ENCODE measurements at regions of chr1 and their contacts with region 1.

Region 1: DNA sequence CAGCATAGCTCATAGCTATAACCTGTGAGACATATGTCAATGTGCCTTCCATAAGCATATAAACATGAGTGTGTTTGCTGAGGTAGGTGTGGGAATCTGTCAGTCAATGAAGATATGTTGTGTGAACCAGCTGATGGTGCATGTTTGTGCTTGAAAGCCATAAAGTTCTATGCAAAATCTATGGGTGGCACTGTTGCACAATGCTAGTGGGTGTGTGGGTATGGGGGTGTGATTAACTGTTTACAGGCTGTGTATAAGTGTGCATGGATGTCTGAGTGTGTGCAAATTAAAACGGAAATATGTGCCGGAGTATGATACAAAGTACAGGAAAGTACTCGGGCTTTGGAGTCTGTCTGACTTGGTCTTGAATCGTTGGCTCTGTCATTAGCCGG is 1.0 kb upstream of the ATP2B4 start:
- DNase-seq: peak; percentile 86 to 95 (median 91)
- H3K4me3 ChIP-seq: peak overlapping the region in 5 of 7 experiments; percentile 9 to 98 (median 88)
- H3K27ac ChIP-seq: peak overlapping the region; percentile 80 to 91
- H3K4me1 ChIP-seq: peaks cover 7 to 77% (median 58%) of the 10 kb centered on the region in 4 experiments
- H3K27me3 ChIP-seq: no peaks in the 10 kb centered on the region

Region 2: GRCh38 chr1:203428981-203429599 is 196.5 kb before region 1 on chr1:
- CTCF ChIA-PET with region 1: no interaction called
- POLR2A ChIA-PET with region 1: no interaction called
- DNase-seq: peak in 1 of 3 donors; percentile 9
- H3K4me3 ChIP-seq: no peak overlapping the region
- H3K27ac ChIP-seq: no peak overlapping the region
- H3K4me1 ChIP-seq: no peaks in the 10 kb centered on the region
- H3K27me3 ChIP-seq: peaks cover 0 to 12% (median 6%) of the 10 kb centered on the region in 5 experiments

Region 3: GRCh38 chr1:203440771-203441170 is 184.9 kb before region 1 on chr1:
- CTCF ChIA-PET with region 1: no interaction called
- POLR2A ChIA-PET with region 1: no interaction called
- DNase-seq: peak; percentile 4 to 20 (median 15)
- H3K4me3 ChIP-seq: no peak overlapping the region
- H3K27ac ChIP-seq: no peak overlapping the region
- H3K4me1 ChIP-seq: no peaks in the 10 kb centered on the region
- H3K27me3 ChIP-seq: peaks cover 0 to 14% (median 8%) of the 10 kb centered on the region in 5 experiments

Region 4: DNA sequence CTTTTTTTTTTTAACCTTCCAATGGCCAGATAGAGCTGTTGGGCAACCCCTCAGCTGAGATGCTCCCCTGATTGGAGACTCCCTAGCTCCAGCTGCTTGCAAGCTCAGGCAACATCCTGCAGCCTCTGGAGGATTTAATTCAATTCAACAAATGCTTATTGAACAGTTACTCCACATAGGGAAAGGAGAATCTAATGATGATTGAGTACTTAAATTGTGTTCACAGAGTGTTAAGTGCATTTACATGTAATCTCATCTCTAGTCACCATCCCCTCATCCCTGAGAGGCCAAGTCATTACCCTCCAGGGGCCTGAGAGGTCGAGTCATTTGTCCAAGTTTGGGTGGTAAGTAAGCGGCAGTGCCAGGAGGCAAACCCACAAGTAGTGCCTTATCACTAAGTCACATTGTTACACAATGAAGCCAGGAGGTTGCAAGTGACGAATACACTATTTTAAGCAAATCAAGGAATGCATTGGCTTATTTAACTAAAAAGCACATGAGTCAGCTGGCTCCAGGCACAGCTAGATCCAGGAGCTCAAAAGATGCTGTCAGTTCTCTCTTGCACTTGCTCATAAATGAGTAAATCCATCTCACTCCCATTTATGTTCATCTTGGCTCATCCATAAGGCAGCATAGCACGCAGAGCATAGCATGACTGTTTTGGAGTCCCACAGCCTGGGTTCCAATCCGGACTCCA is 67.4 kb before region 1 on chr1:
- CTCF ChIA-PET with region 1: no interaction called
- POLR2A ChIA-PET with region 1: no interaction called
- DNase-seq: peak in 1 of 3 donors; percentile 11
- H3K4me3 ChIP-seq: peak overlapping the region in 1 of 7 experiments; percentile 1
- H3K27ac ChIP-seq: no peak overlapping the region
- H3K4me1 ChIP-seq: no peaks in the 10 kb centered on the region
- H3K27me3 ChIP-seq: peaks cover 0 to 2% (median 0%) of the 10 kb centered on the region in 5 experiments

Region 5: DNA sequence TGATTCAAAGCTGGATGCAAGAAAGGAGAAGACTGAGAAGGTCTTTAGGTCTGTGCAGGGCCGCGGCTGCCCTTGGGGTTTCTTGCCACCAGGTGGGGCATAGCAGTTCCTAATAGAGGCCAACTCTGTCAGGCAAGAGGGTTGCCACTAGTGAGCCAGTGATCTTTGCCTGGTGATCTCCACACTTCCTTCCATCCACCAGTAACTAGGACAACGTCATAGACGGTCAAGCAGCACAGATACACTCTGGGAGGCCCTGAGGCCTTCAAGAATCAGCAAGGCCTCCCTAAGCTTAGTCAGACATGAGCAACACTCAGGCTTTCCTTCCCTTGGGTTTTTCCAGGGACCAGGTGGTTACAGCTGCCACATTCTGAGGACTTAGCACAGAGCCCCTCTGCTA is 31.9 kb before region 1 on chr1:
- CTCF ChIA-PET with region 1: interaction called, 13 read pairs
- POLR2A ChIA-PET with region 1: no interaction called
- DNase-seq: peak; percentile 53 to 78 (median 72)
- H3K4me3 ChIP-seq: no peak overlapping the region
- H3K27ac ChIP-seq: no peak overlapping the region
- H3K4me1 ChIP-seq: peaks cover 0 to 5% (median 0%) of the 10 kb centered on the region in 4 experiments
- H3K27me3 ChIP-seq: peaks cover 0 to 2% (median 0%) of the 10 kb centered on the region in 5 experiments

Region 6: DNA sequence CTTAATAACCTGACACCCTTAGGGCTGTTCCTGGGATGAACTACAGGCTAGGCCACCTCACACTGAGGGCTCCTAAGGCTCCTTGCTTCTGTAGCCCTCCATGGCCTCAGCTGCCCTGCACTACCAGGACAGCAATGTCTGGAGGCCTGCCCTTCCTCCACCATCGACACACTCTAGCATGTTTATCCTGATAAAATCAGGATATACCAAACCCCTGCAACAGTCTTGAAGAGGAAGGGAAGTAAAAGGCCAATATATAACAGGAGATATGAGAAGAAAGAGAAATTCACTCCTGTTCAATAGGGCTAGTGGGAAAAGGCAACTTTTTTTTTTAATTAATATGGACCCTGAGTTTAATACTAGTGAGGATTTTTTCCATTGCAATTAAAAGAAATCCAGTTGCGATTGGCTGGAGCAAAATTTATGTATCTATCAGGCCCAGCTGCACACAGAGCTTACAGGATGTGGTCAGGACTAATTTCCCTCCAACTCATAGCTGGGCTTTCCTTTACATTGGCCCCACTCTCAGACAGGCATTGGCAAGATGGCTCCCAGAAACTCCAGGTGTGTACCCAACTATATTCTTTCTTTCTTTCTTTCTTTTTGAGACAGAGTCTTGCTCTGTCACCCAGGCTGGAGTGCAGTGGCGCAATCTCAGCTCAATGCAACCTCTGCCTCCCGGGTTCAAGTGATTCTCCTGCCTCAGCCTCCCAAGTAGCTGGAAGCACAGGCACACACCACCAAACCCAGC is 12.5 kb before region 1 on chr1:
- CTCF ChIA-PET with region 1: interaction called, 21 read pairs
- POLR2A ChIA-PET with region 1: interaction called, 11 read pairs
- DNase-seq: peak; percentile 43 to 91 (median 84)
- H3K4me3 ChIP-seq: peak overlapping the region in 2 of 7 experiments; percentile 11 to 19
- H3K27ac ChIP-seq: no peak overlapping the region
- H3K4me1 ChIP-seq: peaks cover 6 to 31% (median 31%) of the 10 kb centered on the region in 4 experiments
- H3K27me3 ChIP-seq: no peaks in the 10 kb centered on the region

Region 7: GRCh38 chr1:203649999-203650855 is 24.6 kb after region 1 on chr1:
- CTCF ChIA-PET with region 1: interaction called, 18 read pairs
- POLR2A ChIA-PET with region 1: interaction called, 8 read pairs
- DNase-seq: peak; percentile 50 to 93 (median 88)
- H3K4me3 ChIP-seq: peak overlapping the region in 3 of 7 experiments; percentile 34 to 49 (median 41)
- H3K27ac ChIP-seq: no peak overlapping the region
- H3K4me1 ChIP-seq: peaks cover 6 to 54% (median 42%) of the 10 kb centered on the region in 4 experiments
- H3K27me3 ChIP-seq: no peaks in the 10 kb centered on the region

Region 8: DNA sequence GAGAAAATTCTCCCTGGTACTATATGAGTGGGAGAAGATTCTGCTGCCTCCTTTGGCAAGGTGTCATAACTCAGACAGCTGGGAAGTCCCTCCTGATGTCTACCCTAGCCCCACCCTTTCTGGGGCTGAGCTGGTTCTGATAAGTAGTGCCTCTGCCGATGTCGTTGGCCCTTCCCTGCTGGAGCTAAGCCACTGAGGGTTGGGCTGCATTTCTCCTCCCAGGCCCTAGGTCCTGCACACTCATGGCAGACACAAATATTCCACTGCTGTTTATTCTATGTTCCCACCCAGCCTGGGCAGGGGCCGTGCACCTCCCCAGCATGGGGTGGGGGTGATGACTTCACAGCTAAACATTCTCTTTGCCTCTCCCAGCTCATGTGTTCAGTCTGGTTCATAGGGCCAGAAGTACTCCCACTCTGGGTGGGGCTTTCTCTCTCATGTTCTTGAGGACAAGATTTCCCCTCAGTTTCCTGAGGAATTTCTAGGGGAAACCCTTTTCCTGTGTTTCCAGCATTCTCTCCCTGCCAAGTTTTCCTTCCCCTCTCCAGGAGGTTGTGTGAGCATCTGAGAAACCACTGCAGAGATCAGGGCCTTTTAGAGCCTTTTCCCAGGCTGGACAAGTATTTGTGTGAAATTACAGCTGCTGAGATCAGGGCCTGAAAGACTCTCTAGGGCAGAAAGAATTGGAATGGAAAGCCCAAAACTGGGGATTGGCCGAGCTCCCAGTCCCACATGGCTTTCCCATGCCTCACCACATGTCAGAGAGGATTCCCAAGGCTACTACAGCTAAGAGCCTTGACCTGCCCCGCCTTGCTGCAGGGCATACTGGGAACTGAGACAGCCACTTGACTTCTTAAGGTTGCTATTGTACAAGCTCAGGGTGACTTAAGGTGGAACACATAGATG is 67.2 kb after region 1 on chr1:
- CTCF ChIA-PET with region 1: interaction called, 16 read pairs
- POLR2A ChIA-PET with region 1: interaction called, 3 read pairs
- DNase-seq: no peak
- H3K4me3 ChIP-seq: no peak overlapping the region
- H3K27ac ChIP-seq: peak overlapping the region in 1 of 2 experiments; percentile 55
- H3K4me1 ChIP-seq: peaks cover 0 to 27% (median 2%) of the 10 kb centered on the region in 4 experiments
- H3K27me3 ChIP-seq: no peaks in the 10 kb centered on the region

Region 9: DNA sequence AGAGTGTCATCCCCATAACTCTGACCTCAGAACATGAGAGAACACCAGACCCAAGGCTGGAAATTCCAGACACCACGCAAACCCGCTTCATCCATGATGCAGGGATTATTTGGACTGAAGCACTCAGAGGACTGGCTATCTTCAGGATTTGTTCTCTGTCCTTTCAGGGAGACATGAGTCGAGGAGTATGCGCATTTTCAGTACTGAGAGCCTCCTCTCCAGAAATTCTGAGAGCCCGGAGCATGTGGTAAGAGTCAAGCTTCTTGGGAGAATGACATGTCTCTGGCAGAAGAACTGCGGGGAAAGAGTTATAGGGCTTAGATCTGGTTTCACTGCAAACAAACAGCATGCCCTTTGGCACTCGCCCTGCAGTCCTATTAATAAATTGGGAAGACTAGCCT is 146.3 kb after region 1 on chr1:
- CTCF ChIA-PET with region 1: no interaction called
- POLR2A ChIA-PET with region 1: no interaction called
- DNase-seq: no peak
- H3K4me3 ChIP-seq: no peak overlapping the region
- H3K27ac ChIP-seq: no peak overlapping the region
- H3K4me1 ChIP-seq: peaks cover 3 to 25% (median 16%) of the 10 kb centered on the region in 4 experiments
- H3K27me3 ChIP-seq: no peaks in the 10 kb centered on the region